Activated CD8-positive, alpha-beta T cell treated with anti-CD3 and anti-CD28 coated beads for 36 hours (primary cell): ENCODE measurements at regions of chr16 and their contacts with region 1.

Region 1: DNA sequence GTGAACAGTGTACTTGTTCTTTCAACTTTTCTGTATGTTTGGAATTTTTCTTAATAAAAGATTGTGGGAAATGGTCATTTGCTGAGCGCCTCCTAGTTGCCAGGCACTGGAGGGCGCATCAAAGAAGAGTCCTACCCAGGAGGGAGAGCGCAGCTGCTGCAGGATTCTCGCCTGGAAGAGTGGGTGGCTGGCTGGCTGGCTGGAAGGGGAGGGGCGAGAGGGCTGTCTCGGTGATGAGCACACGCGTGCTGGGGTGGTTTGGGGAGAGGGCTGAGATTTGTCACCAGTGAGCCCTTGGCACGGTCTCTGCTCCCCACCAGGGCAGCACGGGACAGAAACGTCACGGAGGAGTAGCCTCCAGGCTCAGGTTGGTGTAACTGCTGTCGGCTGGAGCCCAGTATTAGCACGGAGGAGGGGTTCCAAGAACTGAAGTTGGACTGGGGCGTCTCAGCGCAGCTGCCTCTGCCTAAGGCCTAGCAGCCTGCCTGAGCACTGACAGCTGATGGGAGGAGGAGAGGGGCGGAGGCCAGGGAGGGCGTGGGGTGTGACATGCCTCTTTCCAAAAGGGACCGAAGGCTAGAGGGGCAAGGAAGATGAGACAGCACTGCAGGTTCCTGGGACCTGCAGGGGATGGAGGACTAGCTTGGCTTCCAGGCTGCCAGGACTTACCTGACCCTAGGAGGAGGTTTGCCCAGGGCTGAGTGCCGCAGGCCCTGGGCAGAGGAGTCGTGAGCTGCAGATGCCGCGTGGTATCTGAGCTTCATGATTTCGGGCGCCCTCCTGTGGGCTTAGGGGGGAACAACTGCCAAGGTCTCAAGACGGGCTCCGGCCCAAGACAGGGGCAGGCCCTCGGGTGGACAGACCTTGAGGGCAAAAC is 5.7 kb downstream of the LDHD start:
- DNase-seq: peak; percentile 92
- ATAC-seq: peak; percentile 80
- H3K4me3 Mint-ChIP-seq: peak overlapping the region; percentile 74
- H3K27ac Mint-ChIP-seq: peak overlapping the region; percentile 68
- H3K4me1 Mint-ChIP-seq: peaks cover 54% of the 10 kb centered on the region
- H3K27me3 Mint-ChIP-seq: peaks cover 10% of the 10 kb centered on the region
- CTCF ChIP-seq: peak; percentile 89

Region 2: DNA sequence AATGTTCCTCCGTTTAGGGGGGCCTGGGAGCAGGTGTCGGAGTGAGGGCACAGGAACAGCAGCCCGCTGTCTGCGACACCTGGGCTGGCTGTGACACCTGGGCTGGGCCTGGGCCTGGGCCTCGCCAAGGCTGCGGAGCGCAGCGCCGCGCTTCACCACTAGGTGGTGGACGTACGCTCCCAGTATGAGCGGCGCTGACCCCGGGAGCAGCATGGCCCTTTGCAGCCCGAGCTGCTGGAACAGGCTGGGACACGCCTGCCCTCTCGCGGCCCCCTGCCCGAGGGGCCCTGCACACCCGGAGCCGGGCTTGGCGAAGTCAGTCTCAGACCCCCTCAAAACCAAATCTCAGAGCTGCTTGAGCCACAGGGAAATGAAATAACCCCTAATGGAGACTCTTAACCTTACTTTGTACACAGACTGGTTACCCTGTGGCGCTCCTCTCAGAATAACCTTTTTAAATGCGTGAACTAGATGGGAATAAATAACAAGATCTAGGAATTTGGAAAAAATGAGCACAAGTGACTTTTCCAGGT is 297.7 kb before region 1 on chr16:
- CTCF ChIA-PET with region 1: interaction called, 12 read pairs
- POLR2A ChIA-PET with region 1: interaction called, 3 read pairs
- intact Hi-C with region 1: loop called (anchors 10 kb)
- DNase-seq: peak; percentile 84
- ATAC-seq: peak; percentile 100
- H3K4me3 Mint-ChIP-seq: no peak overlapping the region
- H3K27ac Mint-ChIP-seq: no peak overlapping the region
- H3K4me1 Mint-ChIP-seq: no peaks in the 10 kb centered on the region
- H3K27me3 Mint-ChIP-seq: no peaks in the 10 kb centered on the region
- CTCF ChIP-seq: peak; percentile 90

Region 3: DNA sequence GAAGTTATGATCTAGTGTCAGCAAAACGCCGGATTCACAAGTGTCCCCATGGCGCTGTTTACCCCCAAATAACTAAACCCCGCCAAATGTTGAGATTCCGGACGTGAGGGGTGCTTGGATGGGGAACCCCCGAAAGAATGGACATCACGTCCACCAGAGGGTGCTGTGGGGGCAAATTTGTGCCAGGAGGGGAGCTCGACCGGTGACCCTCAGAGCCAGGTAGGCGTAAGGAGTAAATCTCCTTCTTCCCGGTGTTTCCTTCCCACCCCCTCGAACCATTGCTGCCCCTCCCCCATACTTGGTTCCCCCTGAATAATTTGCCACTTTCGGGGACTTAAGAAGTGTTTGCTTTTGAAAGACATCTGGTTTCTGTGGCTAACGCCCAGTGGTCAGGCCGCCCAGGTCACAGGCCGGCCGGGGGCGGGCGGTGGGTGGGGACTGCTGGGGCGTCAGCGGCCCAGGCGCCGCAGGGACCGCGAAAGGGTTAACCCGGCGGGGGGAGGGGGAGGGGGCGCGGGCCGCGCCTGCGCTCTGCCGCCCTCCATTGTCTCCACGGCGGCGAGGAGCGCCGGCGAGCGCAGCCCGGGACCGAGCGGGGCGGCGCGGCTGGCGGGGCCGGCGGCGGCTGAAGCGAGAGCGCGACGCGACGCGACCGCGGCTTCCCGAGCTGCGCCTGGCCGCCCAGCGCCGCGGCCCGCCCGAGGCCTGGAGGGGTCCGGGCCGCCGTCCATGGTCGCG is 112.2 kb before region 1 on chr16 and contains the start of gene ZNRF1:
- CTCF ChIA-PET with region 1: interaction called, 158 read pairs
- POLR2A ChIA-PET with region 1: interaction called, 25 read pairs
- intact Hi-C with region 1: loop called (anchors 2 kb)
- DNase-seq: peak; percentile 92
- ATAC-seq: peak; percentile 86
- H3K4me3 Mint-ChIP-seq: peak within 1 kb of the TSS; percentile 77
- H3K27ac Mint-ChIP-seq: peak within 1 kb of the TSS; percentile 65
- H3K4me1 Mint-ChIP-seq: peaks cover 18% of the 10 kb centered on the region
- H3K27me3 Mint-ChIP-seq: peaks cover 10% of the 10 kb centered on the region
- CTCF ChIP-seq: peak; percentile 80
- total RNA-seq, gene ZNRF1: 11.0 to 13.7 TPM

Region 4: DNA sequence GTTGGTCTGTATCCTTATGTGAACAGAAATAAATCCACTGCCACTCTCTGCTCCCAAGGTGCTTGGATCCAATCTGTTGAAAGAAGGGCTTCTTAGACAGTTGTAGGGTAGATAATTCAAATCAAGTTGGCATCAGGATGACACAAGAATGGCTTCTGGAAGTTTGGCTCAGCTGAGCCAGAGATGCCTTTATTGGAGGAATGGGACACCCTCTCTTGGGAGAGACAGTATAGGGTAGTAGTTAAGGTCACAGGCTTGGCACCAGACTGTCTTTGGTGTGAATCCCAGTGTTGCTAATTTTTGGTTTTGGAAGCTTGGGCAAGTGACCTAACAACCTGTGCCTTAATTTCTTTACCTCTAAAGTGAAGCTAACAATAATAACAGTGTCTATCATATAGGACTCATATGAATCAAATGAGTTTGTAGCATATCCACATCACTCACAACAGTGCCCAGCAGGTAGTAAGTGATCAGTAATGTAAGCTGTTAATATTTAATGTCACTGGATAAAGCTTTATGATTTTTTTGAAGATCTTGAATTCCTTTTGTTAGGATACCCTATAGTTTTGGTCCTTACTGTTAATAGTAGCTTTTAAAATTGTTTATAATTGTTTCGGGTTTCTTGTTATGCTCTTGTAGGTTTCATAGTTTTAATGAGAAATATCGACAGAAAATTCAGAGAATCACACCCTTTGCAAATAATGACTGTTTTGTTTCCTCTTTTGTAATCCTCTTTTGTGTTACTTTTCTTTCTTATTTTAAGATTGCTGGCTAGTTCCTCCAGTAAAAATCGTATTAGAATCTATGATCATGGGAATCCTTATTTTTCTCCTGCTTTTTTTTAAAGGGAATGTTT is 93.0 kb before region 1 on chr16:
- CTCF ChIA-PET with region 1: interaction called, 48 read pairs
- POLR2A ChIA-PET with region 1: no interaction called
- intact Hi-C with region 1: no loop called
- DNase-seq: no peak
- ATAC-seq: no peak
- H3K4me3 Mint-ChIP-seq: no peak overlapping the region
- H3K27ac Mint-ChIP-seq: no peak overlapping the region
- H3K4me1 Mint-ChIP-seq: peaks cover 15% of the 10 kb centered on the region
- H3K27me3 Mint-ChIP-seq: no peaks in the 10 kb centered on the region
- CTCF ChIP-seq: no peak

Region 5: GRCh38 chr16:75074920-75075687 is 35.8 kb before region 1 on chr16:
- CTCF ChIA-PET with region 1: interaction called, 8 read pairs
- POLR2A ChIA-PET with region 1: interaction called, 5 read pairs
- intact Hi-C with region 1: loop called (anchors 5 kb)
- DNase-seq: peak; percentile 90
- ATAC-seq: peak; percentile 92
- H3K4me3 Mint-ChIP-seq: peak overlapping the region; percentile 15
- H3K27ac Mint-ChIP-seq: peak overlapping the region; percentile 87
- H3K4me1 Mint-ChIP-seq: peaks cover 30% of the 10 kb centered on the region
- H3K27me3 Mint-ChIP-seq: no peaks in the 10 kb centered on the region
- CTCF ChIP-seq: no peak

Region 6: DNA sequence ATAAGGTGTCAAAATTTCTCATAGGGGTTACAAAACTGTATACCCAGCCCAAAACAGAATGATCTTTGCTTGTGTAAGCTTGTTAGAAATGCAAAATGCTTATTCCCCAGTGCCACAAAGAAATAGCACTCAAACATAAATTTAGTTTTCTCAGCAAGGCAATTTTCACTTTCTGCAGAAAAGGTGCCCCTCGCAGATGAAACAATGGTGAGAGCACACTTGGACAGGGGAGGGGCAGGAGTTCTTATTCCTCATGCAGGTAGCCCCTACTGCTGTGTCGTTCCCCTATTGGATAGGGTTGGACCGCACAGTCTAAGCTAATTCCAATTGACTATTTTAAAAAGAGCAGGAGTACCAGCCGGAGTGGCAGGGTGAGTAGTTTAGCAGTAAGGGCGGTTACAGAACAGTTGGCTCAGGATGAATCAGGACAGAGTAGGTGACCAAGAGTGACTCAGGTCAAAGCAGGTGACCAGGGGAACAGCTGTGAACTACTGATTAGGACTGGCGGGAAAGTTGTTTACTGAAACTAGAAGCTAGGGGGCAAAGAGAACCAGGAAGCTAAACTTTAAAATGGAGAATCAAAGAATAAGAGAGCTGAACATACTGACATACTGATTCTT is 11.2 kb after region 1 on chr16:
- CTCF ChIA-PET with region 1: interaction called, 15 read pairs
- POLR2A ChIA-PET with region 1: no interaction called
- intact Hi-C with region 1: no loop called
- DNase-seq: no peak
- ATAC-seq: no peak
- H3K4me3 Mint-ChIP-seq: no peak overlapping the region
- H3K27ac Mint-ChIP-seq: no peak overlapping the region
- H3K4me1 Mint-ChIP-seq: no peaks in the 10 kb centered on the region
- H3K27me3 Mint-ChIP-seq: no peaks in the 10 kb centered on the region
- CTCF ChIP-seq: no peak